CD4-positive, alpha-beta memory T cell (primary cell): ENCODE measurements at regions of chr6 and their contacts with region 1.

Region 1: DNA sequence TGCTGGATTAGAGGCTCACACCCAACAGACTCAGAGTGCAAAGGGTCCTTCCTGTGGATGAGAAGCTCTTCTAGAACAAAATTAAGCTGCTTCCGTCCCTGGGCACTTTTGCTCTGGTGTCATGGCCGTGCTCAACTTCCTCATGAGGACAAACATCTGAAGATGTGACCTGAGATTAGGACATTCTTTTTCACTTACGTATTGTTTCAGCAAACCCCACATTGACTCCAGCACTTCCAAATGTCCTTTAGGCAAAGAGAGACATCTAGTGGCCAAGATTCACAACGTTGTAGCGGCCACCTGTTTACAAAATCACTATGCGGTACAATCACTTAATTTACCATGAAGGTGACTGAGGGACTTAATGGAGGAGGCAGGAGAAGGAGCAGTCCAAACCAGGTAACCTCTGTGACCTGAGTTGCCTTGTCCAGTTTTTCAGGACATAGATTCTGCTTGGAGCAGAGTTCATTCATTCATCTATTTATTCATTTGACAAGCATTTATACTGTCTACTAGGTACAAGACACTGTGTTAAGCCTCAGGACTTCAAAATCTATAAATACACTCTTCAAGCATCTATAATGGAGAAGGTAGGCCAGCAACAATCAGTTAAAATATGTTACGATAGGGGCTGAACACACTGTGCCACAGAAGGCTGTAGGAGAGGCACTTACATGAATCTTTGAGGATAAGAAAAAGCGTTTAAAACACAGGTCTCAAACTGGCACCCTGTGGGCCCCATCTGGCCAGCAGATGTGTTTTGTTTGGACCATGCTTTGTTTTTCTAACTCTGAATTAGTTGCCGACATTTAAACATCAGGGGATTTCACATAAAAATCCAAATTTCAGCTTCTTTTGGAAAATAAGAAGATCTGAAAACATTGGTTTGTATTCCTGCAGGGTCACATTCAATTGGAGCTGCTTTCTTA is 5.6 kb upstream of the ADGRF1 start:
- DNase-seq: peak in 2 of 5 donors; percentile 4 to 6
- H3K4me3 ChIP-seq: no peak overlapping the region
- H3K4me3 Mint-ChIP-seq: peak overlapping the region in 1 of 8 donors; percentile 49
- H3K27ac ChIP-seq: no peak overlapping the region
- H3K27ac Mint-ChIP-seq: no peak overlapping the region
- H3K4me1 ChIP-seq: no peaks in the 10 kb centered on the region
- H3K4me1 Mint-ChIP-seq: peaks cover 0 to 3% (median 2%) of the 10 kb centered on the region in 4 donors
- H3K27me3 ChIP-seq: no peaks in the 10 kb centered on the region
- H3K27me3 Mint-ChIP-seq: peaks cover 3 to 9% of the 10 kb centered on the region in 2 donors

Region 2: DNA sequence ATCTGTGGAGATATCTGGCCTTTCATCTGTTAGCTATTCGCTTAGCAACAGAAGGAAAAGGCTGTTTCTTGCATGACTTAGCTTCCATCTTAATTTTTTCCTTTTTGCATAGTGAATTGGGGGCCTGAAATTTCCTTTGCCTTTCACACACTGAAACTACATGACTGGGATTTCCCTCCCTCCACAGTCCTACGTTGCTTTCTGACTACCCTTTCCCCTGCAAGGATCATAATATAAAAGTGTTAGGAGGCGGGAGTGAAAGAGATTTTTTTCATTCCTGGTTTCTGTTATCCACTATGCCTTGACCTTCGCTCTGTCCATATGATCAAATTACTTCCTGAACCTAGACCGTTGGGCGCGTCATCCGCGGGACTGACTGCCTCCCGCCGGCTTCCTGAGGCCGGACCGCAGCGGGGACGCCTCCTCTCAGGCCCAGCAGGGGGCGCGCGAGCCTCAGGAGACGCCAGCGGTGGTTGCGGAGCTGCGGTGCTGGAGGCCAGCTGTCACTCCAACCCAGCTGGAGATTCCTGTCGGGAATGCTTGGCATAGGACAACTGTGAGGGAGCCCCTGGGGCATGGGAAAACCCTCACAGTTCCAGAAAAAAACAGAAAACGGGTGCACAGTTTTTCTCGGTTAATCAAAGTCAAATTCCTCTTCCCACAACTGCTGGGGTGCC is 198.9 kb before region 1 on chr6:
- CTCF ChIA-PET with region 1: no interaction called
- POLR2A ChIA-PET with region 1: no interaction called
- intact Hi-C with region 1: loop called (anchors 2 kb)
- DNase-seq: peak in 4 of 5 donors; percentile 18 to 31 (median 24)
- H3K4me3 ChIP-seq: no peak overlapping the region
- H3K4me3 Mint-ChIP-seq: peak overlapping the region in 7 of 8 donors; percentile 47 to 76 (median 67)
- H3K27ac ChIP-seq: no peak overlapping the region
- H3K27ac Mint-ChIP-seq: peak overlapping the region in 1 of 7 donors; percentile 34
- H3K4me1 ChIP-seq: no peaks in the 10 kb centered on the region
- H3K4me1 Mint-ChIP-seq: peaks cover 0 to 14% (median 7%) of the 10 kb centered on the region in 4 donors
- H3K27me3 ChIP-seq: no peaks in the 10 kb centered on the region
- H3K27me3 Mint-ChIP-seq: peaks cover 11 to 20% of the 10 kb centered on the region in 2 donors

Region 3: DNA sequence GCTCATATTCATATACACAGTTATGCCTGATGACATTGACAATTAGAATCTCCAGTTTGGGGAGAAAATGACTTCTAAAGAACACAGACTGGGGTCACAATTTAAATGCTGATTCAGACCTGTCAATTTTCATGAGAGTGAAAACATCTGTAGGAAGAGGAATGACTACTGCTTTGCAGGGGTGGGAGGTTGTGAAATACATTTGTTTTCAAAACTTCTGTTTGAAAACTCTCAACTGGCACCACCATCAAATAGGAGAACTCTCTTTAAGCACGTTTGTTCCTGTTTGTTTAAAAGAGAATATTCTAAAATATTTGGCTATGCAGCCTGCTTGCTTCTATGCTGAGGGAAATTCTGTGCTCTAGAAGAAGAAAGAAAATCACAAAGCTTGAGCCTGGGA is 75.2 kb before region 1 on chr6:
- CTCF ChIA-PET with region 1: no interaction called
- POLR2A ChIA-PET with region 1: no interaction called
- intact Hi-C with region 1: no loop called
- DNase-seq: no peak
- H3K4me3 ChIP-seq: no peak overlapping the region
- H3K4me3 Mint-ChIP-seq: no peak overlapping the region
- H3K27ac ChIP-seq: no peak overlapping the region
- H3K27ac Mint-ChIP-seq: no peak overlapping the region
- H3K4me1 ChIP-seq: no peaks in the 10 kb centered on the region
- H3K4me1 Mint-ChIP-seq: no peaks in the 10 kb centered on the region
- H3K27me3 ChIP-seq: no peaks in the 10 kb centered on the region
- H3K27me3 Mint-ChIP-seq: no peaks in the 10 kb centered on the region

Region 4: GRCh38 chr6:47111685-47112084 is 63.9 kb after region 1 on chr6:
- CTCF ChIA-PET with region 1: no interaction called
- POLR2A ChIA-PET with region 1: no interaction called
- intact Hi-C with region 1: no loop called
- DNase-seq: no peak
- H3K4me3 ChIP-seq: no peak overlapping the region
- H3K4me3 Mint-ChIP-seq: no peak overlapping the region
- H3K27ac ChIP-seq: no peak overlapping the region
- H3K27ac Mint-ChIP-seq: no peak overlapping the region
- H3K4me1 ChIP-seq: no peaks in the 10 kb centered on the region
- H3K4me1 Mint-ChIP-seq: no peaks in the 10 kb centered on the region
- H3K27me3 ChIP-seq: no peaks in the 10 kb centered on the region
- H3K27me3 Mint-ChIP-seq: peaks cover 2 to 8% of the 10 kb centered on the region in 2 donors